Endothelial cell of umbilical vein (primary cell): ENCODE measurements at regions of chr7 and their contacts with region 1.

Region 1: DNA sequence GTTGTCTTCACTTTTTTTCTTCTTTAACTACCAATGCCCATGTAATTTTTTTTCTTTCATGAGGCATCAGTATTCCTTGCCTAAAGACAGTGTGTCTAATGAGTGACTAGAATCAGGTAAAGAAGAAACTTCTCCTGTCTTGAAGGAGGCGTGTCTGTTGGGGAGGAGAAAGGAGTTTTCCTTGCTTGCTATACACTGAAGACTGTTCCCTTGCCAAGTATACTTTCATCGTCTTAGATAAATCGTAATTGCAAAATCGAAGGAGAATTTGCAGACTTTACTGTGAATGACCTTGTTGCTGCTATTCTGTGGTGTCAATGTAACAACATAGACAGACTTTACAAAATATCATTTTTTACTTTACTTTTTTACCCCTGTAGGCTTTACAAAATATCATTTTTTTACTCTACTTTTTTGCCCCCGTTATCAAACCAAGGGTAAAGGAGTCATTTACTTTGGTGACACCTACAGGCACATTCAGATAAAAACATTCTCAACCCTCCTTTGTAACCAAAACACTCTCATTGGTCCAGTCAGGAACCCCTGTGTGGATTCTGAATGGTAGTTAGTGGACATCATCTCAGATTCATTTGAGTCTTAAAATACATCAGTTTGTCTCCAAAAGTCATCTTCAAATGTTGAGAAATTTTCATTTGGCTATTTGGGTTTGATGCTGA is 232.4 kb downstream of the AHR start:
- DNase-seq: peak; percentile 60
- H3K4me3 ChIP-seq: no peak overlapping the region
- H3K27ac ChIP-seq: no peak overlapping the region
- H3K4me1 ChIP-seq: peaks cover 4% of the 10 kb centered on the region
- H3K27me3 ChIP-seq: no peaks in the 10 kb centered on the region
- CTCF ChIP-seq: peak in 1 of 2 donors; percentile 16
- POLR2A ChIP-seq: no peak

Region 2: GRCh38 chr7:17304926-17305325 is 226.0 kb before region 1 on chr7:
- CTCF ChIA-PET with region 1: interaction called, 57 read pairs
- POLR2A ChIA-PET with region 1: no interaction called
- dilution Hi-C with region 1: no loop called
- intact Hi-C with region 1: loop called (anchors 1 kb)
- DNase-seq: peak; percentile 94
- H3K4me3 ChIP-seq: peak overlapping the region in 1 of 3 experiments; percentile 27
- H3K27ac ChIP-seq: peak overlapping the region; percentile 79
- H3K4me1 ChIP-seq: peaks cover 52% of the 10 kb centered on the region
- H3K27me3 ChIP-seq: no peaks in the 10 kb centered on the region
- CTCF ChIP-seq: no peak
- POLR2A ChIP-seq: no peak

Region 3: GRCh38 chr7:17554341-17555015 is 23.6 kb after region 1 on chr7:
- CTCF ChIA-PET with region 1: no interaction called
- POLR2A ChIA-PET with region 1: no interaction called
- dilution Hi-C with region 1: no loop called
- intact Hi-C with region 1: no loop called
- DNase-seq: no peak
- H3K4me3 ChIP-seq: no peak overlapping the region
- H3K27ac ChIP-seq: no peak overlapping the region
- H3K4me1 ChIP-seq: no peaks in the 10 kb centered on the region
- H3K27me3 ChIP-seq: no peaks in the 10 kb centered on the region
- CTCF ChIP-seq: no peak
- POLR2A ChIP-seq: no peak

Region 4: GRCh38 chr7:17882685-17883084 is 351.8 kb after region 1 on chr7:
- CTCF ChIA-PET with region 1: no interaction called
- POLR2A ChIA-PET with region 1: no interaction called
- dilution Hi-C with region 1: no loop called
- intact Hi-C with region 1: no loop called
- DNase-seq: no peak
- H3K4me3 ChIP-seq: no peak overlapping the region
- H3K27ac ChIP-seq: no peak overlapping the region
- H3K4me1 ChIP-seq: no peaks in the 10 kb centered on the region
- H3K27me3 ChIP-seq: no peaks in the 10 kb centered on the region
- CTCF ChIP-seq: no peak
- POLR2A ChIP-seq: no peak